K562 (cell line): ENCODE measurements at regions of chr1 and their contacts with region 1.

Region 1: GRCh38 chr1:56472860-56473259 is 106.5 kb downstream of the PLPP3 start:
- DNase-seq: no peak
- ATAC-seq: peak; percentile 35; the same call in 2 of the 3 replicates
- H3K4me3 ChIP-seq: no peak overlapping the region
- H3K27ac ChIP-seq: no peak overlapping the region
- H3K4me1 ChIP-seq: peaks cover 0 to 8% of the 10 kb centered on the region in 2 experiments; a peak in 1 of 5 replicates
- H3K27me3 ChIP-seq: peaks cover 21 to 36% of the 10 kb centered on the region in 2 experiments
- CTCF ChIP-seq: no peak
- EP300 ChIP-seq: no peak
- POLR2A ChIP-seq: no peak
- RAD21 ChIP-seq: no peak

Region 2: GRCh38 chr1:56557746-56558145 is 84.9 kb after region 1 on chr1:
- CTCF ChIA-PET with region 1: no interaction called
- POLR2A ChIA-PET with region 1: no interaction called
- in situ Hi-C with region 1: no loop called
- intact Hi-C with region 1: no loop called
- DNase-seq: no peak
- ATAC-seq: no peak
- H3K4me3 ChIP-seq: no peak overlapping the region
- H3K27ac ChIP-seq: no peak overlapping the region
- H3K4me1 ChIP-seq: no peaks in the 10 kb centered on the region
- H3K27me3 ChIP-seq: peaks cover 0 to 6% of the 10 kb centered on the region in 2 experiments; a peak in 1 of 5 replicates
- CTCF ChIP-seq: no peak
- EP300 ChIP-seq: no peak
- POLR2A ChIP-seq: no peak
- RAD21 ChIP-seq: no peak

Region 3: GRCh38 chr1:56578963-56579875 is 106.4 kb after region 1 on chr1 and contains the start of gene PLPP3:
- CTCF ChIA-PET with region 1: no interaction called
- POLR2A ChIA-PET with region 1: interaction called, 4 read pairs
- in situ Hi-C with region 1: no loop called
- intact Hi-C with region 1: loop called (anchors 5 kb)
- DNase-seq: peak in 3 of 4 experiments; percentile 15 to 27 (median 16)
- ATAC-seq: no peak; the same call in 2 of the 3 replicates
- H3K4me3 ChIP-seq: no peak within 1 kb of the TSS
- H3K27ac ChIP-seq: no peak within 1 kb of the TSS
- H3K4me1 ChIP-seq: peaks cover 0 to 13% of the 10 kb centered on the region in 2 experiments; a peak in 1 of 5 replicates
- H3K27me3 ChIP-seq: peaks cover 4 to 19% of the 10 kb centered on the region in 2 experiments; a peak in 3 of 5 replicates
- CTCF ChIP-seq: peak in 2 of 3 experiments; percentile 17 to 47; a peak in 3 of 6 replicates
- EP300 ChIP-seq: no peak
- POLR2A ChIP-seq: no peak
- RAD21 ChIP-seq: no peak
- polyA plus RNA-seq, gene PLPP3: 0.13 to 0.35 TPM